ENCODE measurements at regions of chr4 and their contacts with region 1.

Region 1: DNA sequence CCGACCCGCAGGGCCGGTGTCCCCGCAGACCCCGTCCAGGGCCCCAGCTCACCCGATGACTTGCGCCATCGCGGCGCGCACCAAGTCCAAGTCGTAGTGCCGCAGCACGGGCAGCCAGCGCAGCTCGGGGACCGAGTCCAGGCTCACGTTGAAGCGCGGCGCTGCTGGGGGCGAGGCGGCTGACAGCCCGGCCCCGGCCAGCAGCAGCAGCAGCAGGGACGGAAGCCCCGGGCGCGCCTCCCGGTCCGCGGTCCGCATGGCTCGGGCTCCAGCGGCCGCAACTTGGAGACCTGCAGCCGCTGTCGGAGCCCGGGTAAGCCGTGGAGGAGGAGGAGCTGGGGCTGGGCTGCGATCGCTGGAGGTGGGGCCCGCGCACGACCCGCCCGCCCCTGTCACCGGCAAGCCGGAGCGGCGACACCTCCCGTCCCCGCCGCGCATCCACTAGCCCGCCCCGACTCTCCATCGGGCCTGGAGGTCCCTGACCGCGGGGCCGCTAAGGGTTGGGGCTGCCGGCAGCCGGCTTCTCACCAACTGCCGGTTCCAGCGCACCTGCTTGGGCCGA is at the start of gene NAAA:
- DNase-seq: peak; percentile 91
- ATAC-seq: peak; percentile 75
- H3K4me3 ChIP-seq: peak within 1 kb of the TSS; percentile 80 to 98 (median 97)
- H3K4me3 Mint-ChIP-seq: peak within 1 kb of the TSS; percentile 99
- H3K27ac ChIP-seq: peak within 1 kb of the TSS; percentile 78 to 79
- H3K27ac Mint-ChIP-seq: peak within 1 kb of the TSS; percentile 98
- H3K4me1 ChIP-seq: peaks cover 5 to 14% of the 10 kb centered on the region in 2 donors
- H3K4me1 Mint-ChIP-seq: peaks cover 14% of the 10 kb centered on the region
- H3K27me3 ChIP-seq: no peaks in the 10 kb centered on the region
- H3K27me3 Mint-ChIP-seq: no peaks in the 10 kb centered on the region
- CTCF ChIP-seq: no peak
- total RNA-seq, gene NAAA: 50.4 and 51.4 TPM in 2 replicates

Region 2: GRCh38 chr4:74072739-74073138 is 1868.0 kb before region 1 on chr4:
- CTCF ChIA-PET with region 1: no interaction called
- POLR2A ChIA-PET with region 1: no interaction called
- intact Hi-C with region 1: no loop called
- DNase-seq: no peak
- ATAC-seq: no peak
- H3K4me3 ChIP-seq: no peak overlapping the region
- H3K4me3 Mint-ChIP-seq: no peak overlapping the region
- H3K27ac ChIP-seq: no peak overlapping the region
- H3K27ac Mint-ChIP-seq: no peak overlapping the region
- H3K4me1 ChIP-seq: no peaks in the 10 kb centered on the region
- H3K4me1 Mint-ChIP-seq: no peaks in the 10 kb centered on the region
- H3K27me3 ChIP-seq: no peaks in the 10 kb centered on the region
- H3K27me3 Mint-ChIP-seq: peaks cover 14% of the 10 kb centered on the region
- CTCF ChIP-seq: no peak

Region 3: GRCh38 chr4:75630174-75630936 is 310.4 kb before region 1 on chr4 and contains the start of gene CDKL2:
- CTCF ChIA-PET with region 1: no interaction called
- POLR2A ChIA-PET with region 1: no interaction called
- intact Hi-C with region 1: loop called (anchors 10 kb)
- DNase-seq: peak; percentile 93
- ATAC-seq: peak; percentile 100
- H3K4me3 ChIP-seq: peak within 1 kb of the TSS; percentile 45 to 84 (median 68)
- H3K4me3 Mint-ChIP-seq: peak within 1 kb of the TSS; percentile 95
- H3K27ac ChIP-seq: peak within 1 kb of the TSS in 1 of 2 donors; percentile 59
- H3K27ac Mint-ChIP-seq: peak within 1 kb of the TSS; percentile 71
- H3K4me1 ChIP-seq: peaks cover 4 to 14% of the 10 kb centered on the region in 2 donors
- H3K4me1 Mint-ChIP-seq: peaks cover 11% of the 10 kb centered on the region
- H3K27me3 ChIP-seq: no peaks in the 10 kb centered on the region
- H3K27me3 Mint-ChIP-seq: no peaks in the 10 kb centered on the region
- CTCF ChIP-seq: no peak
- total RNA-seq, gene CDKL2: 0.27 and 0.81 TPM in 2 replicates

Region 4: DNA sequence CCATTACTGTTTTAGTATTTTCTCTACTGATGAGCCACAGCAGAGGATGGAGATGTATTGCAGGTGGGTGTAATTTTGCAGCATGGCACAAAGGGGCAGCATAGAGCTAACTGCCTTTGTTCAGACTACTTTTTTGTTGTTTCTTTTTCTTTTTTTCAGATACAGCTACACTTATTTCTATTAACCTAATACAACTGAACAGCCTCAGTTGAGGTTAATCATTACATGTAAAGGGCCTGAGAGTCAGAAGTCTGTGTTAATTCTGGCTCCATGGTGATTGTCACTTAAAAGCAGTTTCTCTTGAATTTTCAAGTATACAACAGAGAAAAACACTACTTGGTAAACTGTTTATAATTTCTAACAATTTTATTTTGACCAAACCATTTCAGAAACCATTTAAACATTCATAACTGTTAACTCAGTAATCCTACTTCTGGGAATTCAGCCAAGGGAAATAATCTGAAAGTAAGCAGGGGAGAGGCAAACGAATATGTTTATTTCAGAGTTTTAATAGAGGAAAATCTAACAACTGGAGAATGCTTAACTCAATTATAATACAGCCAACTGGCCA is 24.6 kb before region 1 on chr4:
- CTCF ChIA-PET with region 1: interaction called, 8 read pairs
- POLR2A ChIA-PET with region 1: interaction called, 15 read pairs
- intact Hi-C with region 1: no loop called
- DNase-seq: peak; percentile 48
- ATAC-seq: peak; percentile 79
- H3K4me3 ChIP-seq: no peak overlapping the region
- H3K4me3 Mint-ChIP-seq: no peak overlapping the region
- H3K27ac ChIP-seq: no peak overlapping the region
- H3K27ac Mint-ChIP-seq: no peak overlapping the region
- H3K4me1 ChIP-seq: no peaks in the 10 kb centered on the region
- H3K4me1 Mint-ChIP-seq: no peaks in the 10 kb centered on the region
- H3K27me3 ChIP-seq: no peaks in the 10 kb centered on the region
- H3K27me3 Mint-ChIP-seq: no peaks in the 10 kb centered on the region
- CTCF ChIP-seq: peak; percentile 79

Region 5: DNA sequence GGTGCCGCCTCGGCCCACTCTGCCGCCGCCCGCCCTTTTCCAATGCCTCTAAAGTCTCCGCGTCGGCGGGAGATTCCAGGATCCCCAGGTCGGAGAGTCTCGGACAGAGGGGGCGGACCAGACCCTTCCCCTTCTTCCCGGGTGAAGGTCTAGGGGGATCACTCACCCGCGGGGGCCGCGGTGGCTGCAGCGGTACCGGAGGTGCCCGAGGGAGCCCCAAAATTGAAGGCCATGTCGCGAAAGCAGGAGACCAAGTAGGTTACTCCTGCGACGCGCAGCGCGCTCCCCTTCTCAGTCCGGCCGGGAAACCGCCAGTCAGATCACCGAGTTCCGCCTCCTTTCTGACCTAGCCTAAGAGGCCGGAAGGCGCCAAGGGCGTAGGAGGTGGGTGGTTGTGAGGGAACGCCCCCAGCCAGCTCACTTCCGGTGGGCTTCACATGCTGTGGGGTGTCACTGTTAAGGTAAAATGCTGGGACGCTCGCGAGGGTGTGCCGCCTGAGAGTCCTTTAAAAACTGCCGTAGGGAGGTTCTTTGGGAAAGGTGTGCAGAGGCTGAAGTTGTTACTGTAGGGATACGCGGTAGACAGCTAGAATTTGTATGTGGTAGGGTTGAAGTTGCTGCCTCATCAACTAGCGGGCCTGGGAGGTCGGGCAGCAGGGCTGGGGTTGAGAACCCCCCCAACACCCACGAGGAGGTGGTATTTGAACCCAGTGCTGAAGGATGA is 207.5 kb after region 1 on chr4 and contains the start of gene NUP54:
- CTCF ChIA-PET with region 1: no interaction called
- POLR2A ChIA-PET with region 1: interaction called, 3 read pairs
- intact Hi-C with region 1: loop called (anchors 2 kb)
- DNase-seq: peak; percentile 95
- ATAC-seq: peak; percentile 98
- H3K4me3 ChIP-seq: peak within 1 kb of the TSS; percentile 71 to 98 (median 97)
- H3K4me3 Mint-ChIP-seq: peak within 1 kb of the TSS; percentile 98
- H3K27ac ChIP-seq: peak within 1 kb of the TSS; percentile 77 to 91
- H3K27ac Mint-ChIP-seq: peak within 1 kb of the TSS; percentile 89
- H3K4me1 ChIP-seq: peaks cover 22 to 28% of the 10 kb centered on the region in 2 donors
- H3K4me1 Mint-ChIP-seq: peaks cover 35% of the 10 kb centered on the region
- H3K27me3 ChIP-seq: no peaks in the 10 kb centered on the region
- H3K27me3 Mint-ChIP-seq: no peaks in the 10 kb centered on the region
- CTCF ChIP-seq: no peak
- total RNA-seq, gene NUP54: 71.0 and 71.4 TPM in 2 replicates

Region 6: GRCh38 chr4:76197971-76198410 is 257.2 kb after region 1 on chr4:
- CTCF ChIA-PET with region 1: no interaction called
- POLR2A ChIA-PET with region 1: no interaction called
- intact Hi-C with region 1: no loop called
- DNase-seq: no peak
- ATAC-seq: no peak
- H3K4me3 ChIP-seq: no peak overlapping the region
- H3K4me3 Mint-ChIP-seq: peak overlapping the region; percentile 4
- H3K27ac ChIP-seq: peak overlapping the region; percentile 30 to 42
- H3K27ac Mint-ChIP-seq: peak overlapping the region; percentile 64
- H3K4me1 ChIP-seq: peaks cover 50 to 54% of the 10 kb centered on the region in 2 donors
- H3K4me1 Mint-ChIP-seq: peaks cover 53% of the 10 kb centered on the region
- H3K27me3 ChIP-seq: no peaks in the 10 kb centered on the region
- H3K27me3 Mint-ChIP-seq: no peaks in the 10 kb centered on the region
- CTCF ChIP-seq: no peak